ENCODE measurements at regions of chr7 and their contacts with region 1.

Region 1: DNA sequence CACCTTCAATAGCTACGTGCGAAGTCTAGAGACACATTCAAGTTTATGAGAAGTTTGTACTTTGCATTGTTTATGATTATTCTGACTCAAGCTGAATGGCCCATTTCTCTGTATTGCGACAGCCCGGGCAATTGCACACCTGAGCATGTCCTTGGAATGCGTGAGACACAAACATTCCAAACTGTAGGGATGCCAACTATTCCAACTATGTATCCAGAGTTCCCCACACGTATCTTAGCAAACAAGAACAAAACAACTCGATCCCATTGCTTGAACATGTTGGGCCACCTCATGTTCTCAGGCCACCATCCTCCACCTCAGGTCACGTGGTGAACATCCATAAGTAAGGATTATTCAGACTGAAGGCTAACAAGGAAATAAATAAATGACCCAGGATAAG is 51.4 kb upstream of the EGFR start:
- DNase-seq: peak; percentile 100
- H3K4me3 ChIP-seq: no peak overlapping the region
- H3K27ac ChIP-seq: peak overlapping the region; percentile 97
- H3K4me1 ChIP-seq: peaks cover 54% of the 10 kb centered on the region
- H3K27me3 ChIP-seq: no peaks in the 10 kb centered on the region
- CTCF ChIP-seq: no peak

Region 2: DNA sequence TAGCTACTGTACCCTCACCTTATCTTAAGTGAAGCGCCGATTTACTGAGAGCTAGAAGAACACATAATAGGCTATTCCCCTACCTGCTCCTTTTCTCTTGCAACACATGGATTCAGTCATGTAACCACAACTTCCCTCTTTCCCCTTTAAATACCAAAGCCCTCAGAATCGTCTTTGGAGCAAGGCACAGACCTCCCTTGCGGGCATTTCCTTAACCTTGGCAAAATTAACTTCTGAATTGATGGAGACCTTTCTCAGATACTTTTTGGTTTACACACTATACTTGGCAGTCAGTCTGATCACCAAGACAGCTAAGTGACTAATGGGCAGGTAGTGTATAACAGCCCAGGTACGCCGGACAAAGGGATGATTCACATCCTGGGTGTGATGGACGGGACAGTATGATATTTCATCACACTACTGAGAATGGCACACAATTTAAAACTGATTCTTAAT is 135.7 kb before region 1 on chr7:
- CTCF ChIA-PET with region 1: interaction called, 4 read pairs
- dilution Hi-C with region 1: loop called (anchors 5 kb)
- in situ Hi-C with region 1: no loop called
- intact Hi-C with region 1: loop called (anchors 1 kb)
- DNase-seq: peak; percentile 99
- H3K4me3 ChIP-seq: peak overlapping the region in 2 of 3 experiments; percentile 23 to 32
- H3K27ac ChIP-seq: peak overlapping the region; percentile 94
- H3K4me1 ChIP-seq: peaks cover 28% of the 10 kb centered on the region
- H3K27me3 ChIP-seq: no peaks in the 10 kb centered on the region
- CTCF ChIP-seq: no peak

Region 3: DNA sequence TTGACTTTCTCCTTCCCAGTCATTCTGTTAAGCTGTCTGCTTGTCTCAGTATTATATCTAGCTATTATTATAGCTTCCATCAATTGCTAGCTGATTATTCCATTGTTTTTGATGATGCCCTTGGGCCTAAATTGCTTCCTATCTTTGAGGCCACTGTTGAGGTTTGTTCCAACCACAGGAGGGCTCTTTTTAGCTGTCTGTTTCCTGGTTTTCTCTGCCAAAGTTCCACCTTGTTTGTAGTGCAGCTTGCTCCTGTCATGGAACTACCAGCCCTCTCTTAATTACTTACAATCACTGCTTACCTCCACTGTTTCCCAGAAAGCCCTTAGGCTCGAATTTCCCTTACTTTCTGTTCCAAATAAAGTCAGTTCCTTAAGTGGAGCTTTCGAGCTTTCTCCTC is 89.7 kb before region 1 on chr7:
- CTCF ChIA-PET with region 1: no interaction called
- dilution Hi-C with region 1: no loop called
- in situ Hi-C with region 1: no loop called
- intact Hi-C with region 1: loop called (anchors 1 kb)
- DNase-seq: peak; percentile 40
- H3K4me3 ChIP-seq: no peak overlapping the region
- H3K27ac ChIP-seq: no peak overlapping the region
- H3K4me1 ChIP-seq: peaks cover 11% of the 10 kb centered on the region
- H3K27me3 ChIP-seq: no peaks in the 10 kb centered on the region
- CTCF ChIP-seq: peak in 1 of 2 donors; percentile 61

Region 4: GRCh38 chr7:54946749-54947148 is 20.6 kb before region 1 on chr7:
- CTCF ChIA-PET with region 1: no interaction called
- dilution Hi-C with region 1: no loop called
- in situ Hi-C with region 1: no loop called
- intact Hi-C with region 1: loop called (anchors 1 kb)
- DNase-seq: peak; percentile 91
- H3K4me3 ChIP-seq: no peak overlapping the region
- H3K27ac ChIP-seq: peak overlapping the region; percentile 99
- H3K4me1 ChIP-seq: peaks cover 24% of the 10 kb centered on the region
- H3K27me3 ChIP-seq: no peaks in the 10 kb centered on the region
- CTCF ChIP-seq: no peak

Region 5: GRCh38 chr7:54995631-54996340 is 28.4 kb after region 1 on chr7:
- CTCF ChIA-PET with region 1: no interaction called
- dilution Hi-C with region 1: no loop called
- in situ Hi-C with region 1: no loop called
- intact Hi-C with region 1: loop called (anchors 1 kb)
- DNase-seq: peak; percentile 92
- H3K4me3 ChIP-seq: peak overlapping the region in 1 of 3 experiments; percentile 4
- H3K27ac ChIP-seq: peak overlapping the region; percentile 88
- H3K4me1 ChIP-seq: peaks cover 31% of the 10 kb centered on the region
- H3K27me3 ChIP-seq: no peaks in the 10 kb centered on the region
- CTCF ChIP-seq: no peak

Region 6: DNA sequence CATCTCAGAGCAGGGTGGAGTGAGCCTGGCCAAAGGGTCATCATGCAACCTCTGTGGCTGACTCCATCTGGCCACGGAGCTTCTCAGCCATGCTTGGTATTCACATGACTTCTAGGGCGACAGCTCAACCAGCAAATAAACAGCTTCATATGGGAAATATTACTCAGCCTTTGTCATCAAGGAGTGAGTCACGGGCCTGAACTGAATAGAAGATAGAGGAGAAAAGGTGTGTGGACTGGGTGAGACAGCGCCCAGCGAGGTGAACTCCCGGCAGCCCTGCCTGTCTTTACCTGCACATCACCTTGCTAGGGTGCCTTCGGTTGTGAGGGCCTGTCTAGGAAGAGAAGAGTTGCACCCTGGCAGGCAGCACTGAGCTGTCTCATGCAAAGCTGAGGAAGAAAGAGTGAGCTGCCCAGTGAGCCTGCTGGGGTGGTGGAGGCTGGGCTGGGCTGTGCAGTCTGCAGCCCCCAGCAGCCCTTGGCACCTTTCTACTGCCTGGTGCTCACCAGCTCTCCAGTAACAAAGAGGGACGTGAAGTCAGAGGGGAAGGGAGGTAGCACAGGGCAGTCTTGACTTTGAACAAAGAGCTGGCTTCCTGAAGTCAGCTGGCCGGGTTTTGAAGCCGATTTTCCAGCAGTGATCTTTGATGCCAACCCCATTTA is 165.6 kb after region 1 on chr7:
- CTCF ChIA-PET with region 1: interaction called, 3 read pairs
- dilution Hi-C with region 1: no loop called
- in situ Hi-C with region 1: no loop called
- intact Hi-C with region 1: loop called (anchors 2 kb)
- DNase-seq: peak; percentile 100
- H3K4me3 ChIP-seq: peak overlapping the region in 1 of 3 experiments; percentile 27
- H3K27ac ChIP-seq: peak overlapping the region; percentile 97
- H3K4me1 ChIP-seq: peaks cover 79% of the 10 kb centered on the region
- H3K27me3 ChIP-seq: no peaks in the 10 kb centered on the region
- CTCF ChIP-seq: peak in 1 of 2 donors; percentile 14

Region 7: GRCh38 chr7:55177589-55178261 is 210.3 kb after region 1 on chr7:
- CTCF ChIA-PET with region 1: no interaction called
- dilution Hi-C with region 1: no loop called
- in situ Hi-C with region 1: no loop called
- intact Hi-C with region 1: no loop called
- DNase-seq: no peak
- H3K4me3 ChIP-seq: no peak overlapping the region
- H3K27ac ChIP-seq: no peak overlapping the region
- H3K4me1 ChIP-seq: peaks cover under 1% of the 10 kb centered on the region
- H3K27me3 ChIP-seq: no peaks in the 10 kb centered on the region
- CTCF ChIP-seq: no peak

Measured in mammary epithelial cell (primary cell).